Spleen (tissue), 13 donors: ENCODE measurements at regions of chr12 and their contacts with region 1.

Region 1: DNA sequence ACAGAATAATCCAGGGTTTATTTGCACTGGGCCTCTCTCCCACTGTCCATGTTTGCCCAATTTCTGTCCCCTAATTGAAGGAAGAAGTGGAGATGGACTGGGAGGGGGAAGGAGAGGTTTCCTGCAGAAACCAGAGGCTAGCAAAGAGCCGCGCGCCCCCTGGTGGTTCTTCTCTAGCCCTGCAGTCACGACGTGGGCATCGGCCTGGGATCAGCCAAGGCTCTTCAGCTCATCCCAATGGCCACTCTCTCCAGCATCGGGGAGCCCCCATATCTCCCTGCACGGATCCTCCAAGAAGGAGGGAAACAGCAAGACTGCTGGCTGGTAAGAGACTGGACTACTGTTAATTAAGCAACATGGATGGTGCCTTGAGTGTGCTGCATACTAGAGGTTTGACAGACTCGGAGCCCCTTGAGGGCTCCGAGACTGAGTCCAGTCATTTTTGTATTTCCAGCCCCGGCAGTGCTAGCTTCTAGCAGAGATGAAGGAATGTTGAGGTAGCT is 18.7 kb downstream of the ZBTB39 start:
- DNase-seq: peak; percentile 94
- H3K4me3 ChIP-seq: peak overlapping the region in 1 of 8 donors; percentile 39
- H3K27ac ChIP-seq: peak overlapping the region in 5 of 8 donors; percentile 29 to 67 (median 64)
- H3K4me1 ChIP-seq: peaks cover 17 to 56% (median 41%) of the 10 kb centered on the region in 6 donors
- H3K27me3 ChIP-seq: no peaks in the 10 kb centered on the region
- CTCF ChIP-seq: peak; percentile 82 to 98 (median 95)
- POLR2A ChIP-seq: no peak

Region 2: GRCh38 chr12:56271031-56271430 is 716.6 kb before region 1 on chr12:
- intact Hi-C with region 1: no loop called
- DNase-seq: no peak
- H3K4me3 ChIP-seq: no peak overlapping the region
- H3K27ac ChIP-seq: peak overlapping the region in 1 of 8 donors; percentile 18
- H3K4me1 ChIP-seq: peaks cover 9 to 21% (median 16%) of the 10 kb centered on the region in 6 donors
- H3K27me3 ChIP-seq: no peaks in the 10 kb centered on the region
- CTCF ChIP-seq: peak in 2 of 11 experiments; percentile 5 to 15
- POLR2A ChIP-seq: no peak

Region 3: DNA sequence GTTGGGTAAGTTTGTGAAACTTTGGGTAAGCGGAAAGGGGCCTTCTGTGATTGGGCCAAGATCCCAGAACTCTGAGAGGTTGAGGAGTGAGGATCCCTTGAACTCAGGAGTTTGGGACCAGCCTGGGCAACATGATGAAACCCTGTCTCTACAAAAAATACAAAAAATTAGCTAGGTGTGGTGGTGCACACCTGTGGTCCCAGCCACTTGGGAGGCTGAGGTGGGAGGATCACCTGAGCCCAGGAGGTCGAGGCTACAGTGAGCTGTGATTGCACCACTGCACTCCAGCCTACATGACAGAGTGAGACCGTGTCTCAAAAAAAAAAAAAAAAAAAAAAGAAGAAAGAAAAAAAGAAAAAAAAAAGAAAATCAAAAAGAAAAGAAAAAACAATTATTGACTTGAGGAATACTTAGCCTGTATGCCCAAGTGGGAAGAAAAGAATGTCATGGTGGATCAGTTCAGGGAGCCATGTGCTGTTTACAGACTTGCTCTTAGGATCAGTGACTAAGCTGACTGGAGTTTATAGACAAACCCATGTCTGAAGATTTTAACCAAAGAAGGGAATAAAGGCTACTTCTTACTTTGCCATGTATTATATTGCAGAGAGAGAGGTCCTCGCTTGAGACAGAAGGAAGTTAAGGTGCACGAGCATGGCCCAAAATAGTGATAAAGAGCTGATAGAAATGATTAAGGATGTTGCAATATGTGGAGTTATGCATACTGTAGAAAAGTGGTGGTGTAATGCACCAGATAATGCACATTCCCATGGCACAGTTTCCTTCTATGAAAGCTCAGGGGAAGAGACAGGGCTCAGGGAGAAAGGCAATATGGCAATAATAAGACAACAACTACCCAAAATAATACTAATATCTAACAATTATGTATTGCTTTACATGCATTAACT is 223.6 kb before region 1 on chr12:
- intact Hi-C with region 1: loop called (anchors 5 kb)
- DNase-seq: no peak
- H3K4me3 ChIP-seq: peak overlapping the region; percentile 10 to 59 (median 31)
- H3K27ac ChIP-seq: peak overlapping the region in 5 of 8 donors; percentile 59 to 77 (median 62)
- H3K4me1 ChIP-seq: peaks cover 0 to 22% (median 10%) of the 10 kb centered on the region in 6 donors
- H3K27me3 ChIP-seq: no peaks in the 10 kb centered on the region
- CTCF ChIP-seq: no peak
- POLR2A ChIP-seq: no peak

Region 4: GRCh38 chr12:56839915-56840325 is 147.7 kb before region 1 on chr12:
- intact Hi-C with region 1: loop called (anchors 5 kb)
- DNase-seq: peak; percentile 77
- H3K4me3 ChIP-seq: no peak overlapping the region
- H3K27ac ChIP-seq: peak overlapping the region in 6 of 8 donors; percentile 28 to 82 (median 61)
- H3K4me1 ChIP-seq: peaks cover 0 to 47% (median 21%) of the 10 kb centered on the region in 6 donors
- H3K27me3 ChIP-seq: no peaks in the 10 kb centered on the region
- CTCF ChIP-seq: peak; percentile 25 to 68 (median 56)
- POLR2A ChIP-seq: no peak

Region 5: GRCh38 chr12:57033428-57033827 is 45.8 kb after region 1 on chr12:
- intact Hi-C with region 1: no loop called
- DNase-seq: no peak
- H3K4me3 ChIP-seq: no peak overlapping the region
- H3K27ac ChIP-seq: no peak overlapping the region
- H3K4me1 ChIP-seq: peaks cover 0 to 12% (median 8%) of the 10 kb centered on the region in 6 donors
- H3K27me3 ChIP-seq: no peaks in the 10 kb centered on the region
- CTCF ChIP-seq: no peak
- POLR2A ChIP-seq: no peak